SK-N-SH (cell line): ENCODE measurements at regions of chr2 and their contacts with region 1.

Region 1: GRCh38 chr2:208820014-208820688 is 413.6 kb downstream of the PTH2R start:
- DNase-seq: peak; percentile 7
- H3K4me3 ChIP-seq: no peak overlapping the region; a peak in 1 of 4 replicates
- H3K27ac ChIP-seq: no peak overlapping the region
- H3K4me1 ChIP-seq: no peaks in the 10 kb centered on the region
- H3K27me3 ChIP-seq: no peaks in the 10 kb centered on the region
- CTCF ChIP-seq: 0 out of 2 replicates have a peak, but pooled peaks have one; percentile 20
- EP300 ChIP-seq: no peak
- RAD21 ChIP-seq: peak; percentile 68

Region 2: GRCh38 chr2:209322041-209322440 is 501.9 kb after region 1 on chr2:
- CTCF ChIA-PET with region 1: interaction called, 11 read pairs
- POLR2A ChIA-PET with region 1: no interaction called
- DNase-seq: no peak
- H3K4me3 ChIP-seq: no peak overlapping the region
- H3K27ac ChIP-seq: no peak overlapping the region
- H3K4me1 ChIP-seq: peaks cover 0 to 3% of the 10 kb centered on the region in 2 experiments; a peak in 1 of 4 replicates
- H3K27me3 ChIP-seq: no peaks in the 10 kb centered on the region
- CTCF ChIP-seq: peak; percentile 50
- EP300 ChIP-seq: no peak
- RAD21 ChIP-seq: peak; percentile 53